CD8-positive, alpha-beta memory T cell (primary cell): ENCODE measurements at regions of chr19 and their contacts with region 1.

Region 1: GRCh38 chr19:45798995-45799517 is 6.4 kb upstream of the DMWD start:
- DNase-seq: peak; percentile 48 to 73 (median 57)
- H3K4me3 ChIP-seq: no peak overlapping the region
- H3K4me3 Mint-ChIP-seq: peak overlapping the region in 1 of 7 donors; percentile 17
- H3K27ac ChIP-seq: no peak overlapping the region
- H3K27ac Mint-ChIP-seq: peak overlapping the region in 2 of 8 donors; percentile 24 to 25
- H3K4me1 ChIP-seq: peaks cover 7% of the 10 kb centered on the region
- H3K4me1 Mint-ChIP-seq: peaks cover 7 to 11% (median 9%) of the 10 kb centered on the region in 3 donors
- H3K27me3 ChIP-seq: peaks cover 11% of the 10 kb centered on the region
- H3K27me3 Mint-ChIP-seq: peaks cover 12 to 20% of the 10 kb centered on the region in 2 donors

Region 2: GRCh38 chr19:45670670-45671453 is 128.2 kb before region 1 on chr19:
- CTCF ChIA-PET with region 1: no interaction called
- POLR2A ChIA-PET with region 1: no interaction called
- DNase-seq: peak; percentile 24 to 61 (median 41)
- H3K4me3 ChIP-seq: no peak overlapping the region
- H3K4me3 Mint-ChIP-seq: peak overlapping the region in 6 of 7 donors; percentile 19 to 65 (median 32)
- H3K27ac ChIP-seq: peak overlapping the region; percentile 24
- H3K27ac Mint-ChIP-seq: peak overlapping the region in 1 of 8 donors; percentile 17
- H3K4me1 ChIP-seq: peaks cover 20% of the 10 kb centered on the region
- H3K4me1 Mint-ChIP-seq: peaks cover 24 to 39% (median 27%) of the 10 kb centered on the region in 3 donors
- H3K27me3 ChIP-seq: no peaks in the 10 kb centered on the region
- H3K27me3 Mint-ChIP-seq: peaks cover 0 to 12% of the 10 kb centered on the region in 2 donors

Region 3: GRCh38 chr19:45817010-45817724 is 18.1 kb after region 1 on chr19:
- CTCF ChIA-PET with region 1: interaction called, 11 read pairs
- POLR2A ChIA-PET with region 1: no interaction called
- DNase-seq: peak; percentile 89 to 96 (median 92)
- H3K4me3 ChIP-seq: no peak overlapping the region
- H3K4me3 Mint-ChIP-seq: peak overlapping the region in 2 of 7 donors; percentile 3 to 12
- H3K27ac ChIP-seq: peak overlapping the region; percentile 24
- H3K27ac Mint-ChIP-seq: peak overlapping the region in 6 of 8 donors; percentile 21 to 81 (median 44)
- H3K4me1 ChIP-seq: peaks cover 4% of the 10 kb centered on the region
- H3K4me1 Mint-ChIP-seq: peaks cover 3 to 5% (median 3%) of the 10 kb centered on the region in 3 donors
- H3K27me3 ChIP-seq: no peaks in the 10 kb centered on the region
- H3K27me3 Mint-ChIP-seq: peaks cover 0 to 2% of the 10 kb centered on the region in 2 donors

Region 4: DNA sequence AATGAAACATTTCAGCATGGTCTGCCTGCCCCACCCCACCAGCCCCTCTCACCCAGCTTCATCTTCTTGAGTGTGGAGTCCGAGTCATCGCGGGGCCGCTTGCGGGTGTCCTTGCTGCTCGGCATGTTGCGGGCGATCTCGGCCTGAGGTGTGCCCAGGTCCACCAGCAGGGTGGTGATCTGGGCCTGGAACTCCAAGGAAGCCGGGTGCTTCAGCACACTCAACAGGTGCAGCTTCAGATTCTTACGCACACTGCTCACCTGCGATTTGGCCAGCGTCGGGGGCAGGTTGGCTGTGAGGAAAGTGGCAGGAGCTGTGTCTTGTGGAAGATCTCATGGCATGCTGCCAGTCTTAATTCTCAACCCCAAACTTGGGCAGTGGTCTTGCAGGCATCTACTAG is 43.1 kb after region 1 on chr19:
- CTCF ChIA-PET with region 1: no interaction called
- POLR2A ChIA-PET with region 1: no interaction called
- DNase-seq: no peak
- H3K4me3 ChIP-seq: no peak overlapping the region
- H3K4me3 Mint-ChIP-seq: no peak overlapping the region
- H3K27ac ChIP-seq: no peak overlapping the region
- H3K27ac Mint-ChIP-seq: no peak overlapping the region
- H3K4me1 ChIP-seq: no peaks in the 10 kb centered on the region
- H3K4me1 Mint-ChIP-seq: peaks cover 4 to 7% (median 7%) of the 10 kb centered on the region in 3 donors
- H3K27me3 ChIP-seq: no peaks in the 10 kb centered on the region
- H3K27me3 Mint-ChIP-seq: no peaks in the 10 kb centered on the region